ENCODE measurements at regions of chr11 and their contacts with region 1.

Region 1: DNA sequence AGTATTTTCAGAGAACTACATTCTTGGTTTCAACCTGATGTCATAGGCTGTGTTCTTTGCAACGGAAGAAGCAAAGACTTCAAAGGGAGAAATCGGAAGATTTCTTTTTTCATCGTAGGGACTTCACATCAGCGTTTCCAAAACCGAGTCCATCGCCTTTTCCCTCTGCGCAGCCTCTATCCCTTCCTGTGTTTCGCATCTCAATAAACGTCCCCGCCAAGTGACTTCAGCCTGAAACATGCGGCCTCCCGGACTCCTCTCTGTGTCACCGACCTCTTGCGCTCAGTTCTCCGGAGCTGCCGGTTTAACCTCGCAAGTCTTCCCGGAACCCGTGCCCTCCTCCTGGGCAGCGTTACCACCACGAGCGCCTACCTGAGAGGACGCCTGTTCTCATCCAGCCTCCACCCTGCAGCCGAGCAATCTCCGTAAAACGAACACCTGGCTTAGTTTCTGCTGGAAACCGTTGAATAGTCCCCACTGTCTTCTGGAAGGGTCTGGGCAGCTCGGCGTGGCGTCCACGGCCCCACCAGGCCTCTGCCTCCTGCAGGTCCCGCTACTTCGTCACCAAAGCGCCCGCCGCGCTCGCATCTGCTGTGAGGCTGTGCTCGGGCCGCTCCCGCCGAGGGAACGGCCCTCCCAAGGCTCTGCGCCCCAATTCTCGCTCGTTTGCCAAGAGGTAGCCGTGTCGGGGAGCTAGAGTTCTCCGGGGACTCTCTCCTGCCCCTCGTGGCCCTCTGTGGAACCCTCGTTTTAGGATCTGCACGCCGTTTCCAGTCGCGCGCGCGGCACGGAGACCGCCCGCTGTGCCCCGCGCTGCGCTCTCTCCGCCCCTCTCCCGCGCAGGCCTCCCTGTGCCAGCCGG is at the start of gene GLB1L3:
- DNase-seq: peak; percentile 84
- ATAC-seq: peak; percentile 90
- H3K4me3 Mint-ChIP-seq: peak within 1 kb of the TSS; percentile 87
- H3K27ac Mint-ChIP-seq: peak within 1 kb of the TSS; percentile 90
- H3K4me1 Mint-ChIP-seq: peaks cover 36% of the 10 kb centered on the region
- H3K27me3 Mint-ChIP-seq: peaks cover 5% of the 10 kb centered on the region
- total RNA-seq, gene GLB1L3: 5.2 to 6.1 TPM

Region 2: GRCh38 chr11:134253188-134253993 is 22.4 kb before region 1 on chr11 and contains the starts of genes ACAD8 and THYN1:
- POLR2A ChIA-PET with region 1: interaction called, 15 read pairs
- DNase-seq: peak; percentile 92
- ATAC-seq: peak; percentile 100
- H3K4me3 Mint-ChIP-seq: peak within 1 kb of the TSS; percentile 90
- H3K27ac Mint-ChIP-seq: peak within 1 kb of the TSS; percentile 85
- H3K4me1 Mint-ChIP-seq: peaks cover 36% of the 10 kb centered on the region
- H3K27me3 Mint-ChIP-seq: no peaks in the 10 kb centered on the region
- total RNA-seq, gene ACAD8: 29.0 to 29.5 TPM
- total RNA-seq, gene THYN1: 65.8 to 66.8 TPM